ENCODE measurements at regions of chr2 and their contacts with region 1.

Region 1: DNA sequence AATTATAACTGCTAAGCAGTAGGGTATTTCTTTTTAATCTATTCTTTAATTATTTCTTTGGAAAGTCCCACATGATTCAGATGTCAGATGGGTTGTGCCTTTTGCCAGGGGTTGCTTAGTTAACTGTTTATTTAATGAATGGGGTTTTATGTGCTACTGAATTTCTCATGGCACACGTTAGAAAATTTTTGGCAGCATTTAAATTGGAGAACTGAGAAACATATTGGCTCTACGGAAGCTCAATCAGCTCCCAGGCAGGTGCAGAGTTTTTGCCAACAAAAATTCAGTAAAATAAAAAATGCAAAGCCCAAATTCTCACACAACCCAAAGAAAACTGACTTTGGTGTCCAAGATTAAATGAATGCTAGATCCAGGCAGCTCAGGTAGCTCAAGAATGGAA is 467.2 kb downstream of the NRXN1 start:
- DNase-seq: no peak
- H3K4me3 ChIP-seq: no peak overlapping the region
- H3K27ac ChIP-seq: no peak overlapping the region
- H3K4me1 ChIP-seq: no peaks in the 10 kb centered on the region
- H3K27me3 ChIP-seq: no peaks in the 10 kb centered on the region
- CTCF ChIP-seq: no peak
- EP300 ChIP-seq: no peak
- POLR2A ChIP-seq: no peak

Region 2: GRCh38 chr2:50143822-50144575 is 420.8 kb before region 1 on chr2:
- in situ Hi-C with region 1: no loop called
- intact Hi-C with region 1: no loop called
- DNase-seq: no peak
- H3K4me3 ChIP-seq: peak overlapping the region in 2 of 4 donors; percentile 16 to 39
- H3K27ac ChIP-seq: no peak overlapping the region
- H3K4me1 ChIP-seq: no peaks in the 10 kb centered on the region
- H3K27me3 ChIP-seq: no peaks in the 10 kb centered on the region
- CTCF ChIP-seq: peak in 4 of 5 experiments; percentile 27 to 41 (median 34)
- EP300 ChIP-seq: no peak
- POLR2A ChIP-seq: no peak

Region 3: DNA sequence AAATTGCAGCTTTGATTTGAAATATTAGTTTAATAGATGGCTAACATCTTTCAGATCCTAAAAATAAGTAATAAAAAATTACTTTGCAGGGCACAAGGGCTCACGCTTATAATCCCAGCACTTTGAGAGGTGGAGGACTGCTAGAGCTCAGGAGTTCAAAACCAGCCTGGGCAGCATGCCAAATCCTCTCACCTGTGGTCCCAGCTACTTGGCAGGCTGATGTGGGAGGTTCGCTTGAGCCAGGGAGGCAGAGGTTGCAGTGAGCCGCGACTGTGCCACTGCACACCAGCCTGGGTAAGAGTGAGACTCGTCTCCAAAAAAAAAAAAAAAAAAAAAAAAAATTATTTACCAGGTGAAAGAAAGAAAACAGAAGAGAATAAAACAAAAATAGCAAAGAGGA is 17.4 kb after region 1 on chr2:
- in situ Hi-C with region 1: no loop called
- intact Hi-C with region 1: loop called (anchors 1 kb)
- DNase-seq: no peak
- H3K4me3 ChIP-seq: no peak overlapping the region
- H3K27ac ChIP-seq: no peak overlapping the region
- H3K4me1 ChIP-seq: no peaks in the 10 kb centered on the region
- H3K27me3 ChIP-seq: no peaks in the 10 kb centered on the region
- CTCF ChIP-seq: no peak
- EP300 ChIP-seq: no peak
- POLR2A ChIP-seq: no peak

Measured in transverse colon (tissue), 4 donors.